Heart right ventricle (tissue), 16 donors: ENCODE measurements at regions of chr16 and their contacts with region 1.

Region 1: DNA sequence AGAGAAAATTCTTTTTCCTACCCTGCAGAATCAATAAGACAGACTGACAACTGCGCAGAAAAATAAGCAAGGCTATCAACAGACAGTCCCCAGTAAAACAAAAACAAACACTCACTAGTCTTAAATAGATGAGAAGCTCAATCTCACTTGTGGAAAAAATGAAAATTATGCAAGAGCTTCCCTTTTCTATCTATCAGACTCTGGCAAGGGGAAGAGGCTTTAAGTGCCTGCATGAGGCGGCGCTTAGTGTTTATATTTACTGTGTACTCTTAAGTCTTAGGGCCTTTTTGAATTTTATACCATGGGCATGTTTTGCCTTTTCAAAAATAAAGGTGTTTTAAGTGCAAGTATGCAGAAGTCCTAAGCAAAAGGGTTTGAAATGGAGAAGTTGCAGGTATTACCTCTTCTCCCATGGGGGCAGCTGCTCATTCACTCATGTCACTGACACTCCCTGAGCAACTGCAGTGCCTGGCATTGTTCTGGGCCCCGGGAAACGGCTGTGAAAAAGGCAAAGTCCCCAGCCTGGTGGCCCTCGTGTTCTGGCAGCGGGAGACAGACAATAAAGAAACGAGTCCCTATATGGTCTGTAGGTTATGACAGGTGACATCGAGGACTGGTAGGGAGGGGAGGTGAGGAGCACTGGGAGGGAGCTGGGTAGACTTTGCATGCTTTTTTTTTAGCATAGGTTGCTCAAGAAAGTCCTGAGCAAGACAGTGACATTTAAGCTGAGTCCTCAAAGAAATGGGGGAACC is 35.2 kb downstream of the HSBP1 start:
- DNase-seq: no peak
- ATAC-seq: peak in 1 of 8 donors; percentile 27
- H3K4me3 ChIP-seq: no peak overlapping the region
- H3K27ac ChIP-seq: no peak overlapping the region
- H3K4me1 ChIP-seq: peaks cover 0 to 21% (median 0%) of the 10 kb centered on the region in 9 donors
- H3K27me3 ChIP-seq: peaks cover 0 to 5% (median 0%) of the 10 kb centered on the region in 7 donors
- CTCF ChIP-seq: no peak

Region 2: DNA sequence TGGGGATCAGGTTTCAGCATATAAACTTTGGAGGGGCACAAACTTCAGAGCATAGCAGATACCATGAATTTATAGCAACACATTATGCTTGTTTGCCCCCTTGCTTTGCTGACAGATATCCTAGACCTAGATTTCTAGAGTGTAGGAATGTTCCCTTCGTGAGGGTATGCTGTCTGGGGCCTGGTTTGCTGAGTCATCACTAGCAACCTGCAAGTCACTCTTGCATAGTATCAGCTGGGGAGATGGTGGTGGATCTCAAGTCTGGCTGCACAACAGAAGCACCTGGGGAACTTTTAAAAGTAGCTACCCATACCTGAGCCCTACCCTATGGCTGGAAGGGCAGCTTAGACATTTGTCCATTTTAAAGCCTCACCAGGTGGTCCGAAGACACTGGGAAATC is 57.5 kb before region 1 on chr16:
- intact Hi-C with region 1: no loop called
- DNase-seq: no peak
- ATAC-seq: no peak
- H3K4me3 ChIP-seq: no peak overlapping the region
- H3K27ac ChIP-seq: no peak overlapping the region
- H3K4me1 ChIP-seq: peaks cover under 1 to 17% (median 8%) of the 10 kb centered on the region in 9 donors
- H3K27me3 ChIP-seq: no peaks in the 10 kb centered on the region
- CTCF ChIP-seq: no peak

Region 3: GRCh38 chr16:83913245-83913633 is 70.3 kb after region 1 on chr16:
- intact Hi-C with region 1: loop called in 1 of 10 experiments (anchors 5 kb)
- DNase-seq: peak; percentile 78 to 85
- ATAC-seq: peak; percentile 94 to 97 (median 96)
- H3K4me3 ChIP-seq: no peak overlapping the region
- H3K27ac ChIP-seq: peak overlapping the region; percentile 24 to 92 (median 74)
- H3K4me1 ChIP-seq: peaks cover 2 to 33% (median 15%) of the 10 kb centered on the region in 9 donors
- H3K27me3 ChIP-seq: no peaks in the 10 kb centered on the region
- CTCF ChIP-seq: peak in 2 of 9 donors; percentile 16 to 17